PC-9 (cell line): ENCODE measurements at regions of chr2 and their contacts with region 1.

Region 1: DNA sequence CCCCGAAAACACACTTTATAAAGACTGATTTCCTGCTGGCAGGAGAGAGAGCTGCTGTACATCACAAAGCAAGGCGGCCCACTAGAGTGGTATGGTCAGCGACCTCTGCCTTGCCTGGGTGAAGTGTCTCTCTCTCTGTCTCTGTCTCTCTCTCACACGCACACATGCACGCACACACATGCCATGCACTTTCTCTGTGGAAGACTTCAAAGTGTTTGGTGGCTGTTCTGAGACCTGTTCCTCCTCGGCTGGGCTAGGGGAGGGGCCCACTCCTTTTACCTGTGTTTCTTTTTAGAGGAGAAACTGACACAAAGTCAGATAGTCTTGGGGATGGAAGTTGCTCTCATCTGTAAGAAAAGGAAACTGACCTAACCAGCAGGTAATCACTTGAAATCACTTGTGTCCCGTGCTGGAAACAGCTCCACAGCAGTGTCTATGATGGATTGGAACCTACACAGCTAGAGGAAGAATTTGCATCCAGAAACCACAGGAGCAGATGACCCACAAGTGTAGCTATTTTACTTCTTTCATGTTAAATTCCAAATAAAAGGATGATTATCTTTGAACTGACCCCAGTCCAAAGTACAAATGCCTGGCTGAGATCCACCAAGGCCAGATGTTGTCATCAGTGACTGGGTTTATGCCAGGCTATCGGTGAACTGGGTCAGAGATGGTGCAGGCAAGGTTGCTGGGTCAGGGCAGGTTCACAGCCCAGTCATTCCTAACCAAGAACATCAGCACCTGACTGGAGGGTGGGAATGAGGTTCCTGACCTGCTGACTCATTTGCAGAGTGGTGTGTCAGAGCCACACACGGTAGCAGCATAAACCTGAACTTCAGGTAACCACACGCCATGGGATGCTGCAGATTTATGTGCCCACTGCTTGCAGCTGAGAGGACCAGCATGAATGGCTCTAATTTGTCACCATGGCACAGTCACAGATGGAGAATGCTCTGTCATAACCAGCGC is 63.0 kb downstream of the NPAS2 start:
- DNase-seq: peak; percentile 84 to 98
- H3K4me3 ChIP-seq: no peak overlapping the region
- H3K27ac ChIP-seq: peak overlapping the region; percentile 80
- H3K4me1 ChIP-seq: peaks cover 75% of the 10 kb centered on the region
- H3K27me3 ChIP-seq: no peaks in the 10 kb centered on the region
- CTCF ChIP-seq: no peak

Region 2: DNA sequence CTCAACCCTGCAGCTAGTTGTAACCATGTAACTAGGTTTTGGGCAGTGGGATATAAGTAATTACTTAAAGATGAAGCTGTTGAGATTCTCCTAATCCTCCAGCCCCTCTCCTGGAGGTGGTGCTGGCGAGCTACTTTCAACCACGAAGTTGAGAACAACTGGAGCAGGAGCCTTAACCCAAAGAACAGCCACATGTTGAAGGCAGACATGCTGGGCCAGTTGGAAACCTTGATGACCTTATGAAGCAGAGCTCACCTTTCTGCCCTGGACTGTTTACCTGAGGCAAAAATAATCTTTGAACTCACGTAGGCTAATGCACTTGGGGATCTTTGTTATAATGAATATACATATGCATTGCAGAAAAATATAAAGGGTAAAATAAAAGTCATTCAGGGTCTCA is 152.6 kb before region 1 on chr2:
- CTCF ChIA-PET with region 1: interaction called, 3 read pairs
- POLR2A ChIA-PET with region 1: no interaction called
- intact Hi-C with region 1: loop called (anchors 5 kb)
- DNase-seq: peak; percentile 61 to 72
- H3K4me3 ChIP-seq: no peak overlapping the region
- H3K27ac ChIP-seq: no peak overlapping the region
- H3K4me1 ChIP-seq: peaks cover 29% of the 10 kb centered on the region
- H3K27me3 ChIP-seq: no peaks in the 10 kb centered on the region
- CTCF ChIP-seq: peak; percentile 86

Region 3: GRCh38 chr2:100893392-100894089 is 10.6 kb after region 1 on chr2:
- CTCF ChIA-PET with region 1: no interaction called
- POLR2A ChIA-PET with region 1: no interaction called
- intact Hi-C with region 1: loop called (anchors 1 kb)
- DNase-seq: peak; percentile 77 to 85
- H3K4me3 ChIP-seq: no peak overlapping the region
- H3K27ac ChIP-seq: peak overlapping the region; percentile 80
- H3K4me1 ChIP-seq: peaks cover 76% of the 10 kb centered on the region
- H3K27me3 ChIP-seq: no peaks in the 10 kb centered on the region
- CTCF ChIP-seq: no peak

Region 4: DNA sequence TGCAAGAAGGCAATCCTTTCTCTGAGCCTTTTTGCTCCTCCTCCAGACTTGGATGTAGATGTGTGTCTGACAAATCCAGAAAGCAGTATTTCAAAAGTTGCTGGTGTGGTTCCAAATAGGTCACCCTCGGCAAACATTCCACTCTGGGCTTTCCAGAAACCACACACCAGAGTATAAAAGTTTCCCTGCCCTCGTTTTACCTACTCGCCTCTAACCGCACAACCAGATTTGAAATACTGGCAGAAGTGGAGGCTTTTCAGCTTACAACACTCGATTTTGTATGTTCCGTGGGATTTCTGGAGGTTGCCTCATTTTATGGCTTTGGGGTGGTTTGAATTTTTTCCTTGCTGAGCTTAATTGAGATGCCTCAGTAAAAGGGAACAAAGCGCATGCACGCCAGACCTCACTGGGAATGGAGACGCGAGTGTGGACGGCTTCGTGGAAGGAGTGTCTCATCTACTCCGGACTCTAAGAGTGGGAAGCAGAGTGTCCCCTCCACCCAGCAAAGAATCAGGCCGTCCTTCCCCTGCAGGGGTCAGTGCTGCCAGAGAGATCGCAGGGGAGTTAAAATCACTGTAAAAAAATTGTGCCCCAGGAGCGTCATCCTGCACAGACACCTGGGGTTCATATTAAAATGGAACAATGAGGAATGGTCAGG is 75.2 kb after region 1 on chr2:
- CTCF ChIA-PET with region 1: no interaction called
- POLR2A ChIA-PET with region 1: no interaction called
- intact Hi-C with region 1: loop called (anchors 2 kb)
- DNase-seq: peak; percentile 48 to 54
- H3K4me3 ChIP-seq: no peak overlapping the region
- H3K27ac ChIP-seq: peak overlapping the region; percentile 70
- H3K4me1 ChIP-seq: peaks cover 18% of the 10 kb centered on the region; the same call in 1 of the 2 replicates
- H3K27me3 ChIP-seq: no peaks in the 10 kb centered on the region
- CTCF ChIP-seq: no peak

Region 5: GRCh38 chr2:101036562-101037457 is 153.9 kb after region 1 on chr2:
- CTCF ChIA-PET with region 1: interaction called, 10 read pairs
- POLR2A ChIA-PET with region 1: no interaction called
- intact Hi-C with region 1: no loop called
- DNase-seq: no peak
- H3K4me3 ChIP-seq: no peak overlapping the region
- H3K27ac ChIP-seq: no peak overlapping the region
- H3K4me1 ChIP-seq: no peaks in the 10 kb centered on the region
- H3K27me3 ChIP-seq: no peaks in the 10 kb centered on the region
- CTCF ChIP-seq: peak; percentile 71